ENCODE measurements at regions of chr11 and their contacts with region 1.

Region 1: DNA sequence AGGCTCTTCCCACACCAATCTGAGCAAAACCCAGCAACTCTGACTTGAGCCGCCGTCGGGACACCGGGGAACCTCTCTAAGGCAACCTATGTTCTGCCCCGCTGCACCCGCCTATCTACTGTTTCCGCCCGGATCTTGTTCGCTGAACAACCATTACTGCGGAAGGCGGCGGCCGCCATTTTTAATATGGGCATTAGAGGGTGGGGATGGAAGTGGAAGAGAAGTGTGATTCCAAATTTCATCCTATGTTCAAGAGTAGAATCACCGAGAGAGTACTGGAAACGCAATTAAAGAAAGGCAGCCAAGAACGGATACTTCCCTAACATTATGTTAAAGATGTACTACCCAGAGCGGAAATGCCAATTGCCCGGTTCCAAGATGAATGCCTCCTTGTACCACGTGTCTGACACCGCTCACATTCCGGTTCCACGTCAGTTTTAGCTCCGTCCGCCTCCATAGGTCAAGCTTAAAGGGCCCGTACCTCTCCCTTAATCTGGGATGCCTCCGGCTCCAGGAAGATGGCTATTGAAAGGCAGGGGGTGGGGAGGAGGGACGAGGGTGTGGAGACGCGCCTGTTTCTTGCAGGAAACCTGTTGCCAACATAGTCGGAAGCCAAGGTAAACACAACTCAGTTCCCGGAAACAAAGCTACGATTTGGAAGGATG is at the start of gene DPAGT1:
- DNase-seq: peak; percentile 98
- ATAC-seq: peak; percentile 80
- H3K4me3 ChIP-seq: peak within 1 kb of the TSS; percentile 58 to 78
- H3K27ac ChIP-seq: peak within 1 kb of the TSS; percentile 96
- H3K4me1 ChIP-seq: peaks cover 33 to 42% of the 10 kb centered on the region in 2 experiments
- H3K27me3 ChIP-seq: no peaks in the 10 kb centered on the region
- CTCF ChIP-seq: no peak
- POLR2A ChIP-seq: no peak
- RAD21 ChIP-seq: no peak
- total RNA-seq, gene DPAGT1: 45.1 TPM

Region 2: DNA sequence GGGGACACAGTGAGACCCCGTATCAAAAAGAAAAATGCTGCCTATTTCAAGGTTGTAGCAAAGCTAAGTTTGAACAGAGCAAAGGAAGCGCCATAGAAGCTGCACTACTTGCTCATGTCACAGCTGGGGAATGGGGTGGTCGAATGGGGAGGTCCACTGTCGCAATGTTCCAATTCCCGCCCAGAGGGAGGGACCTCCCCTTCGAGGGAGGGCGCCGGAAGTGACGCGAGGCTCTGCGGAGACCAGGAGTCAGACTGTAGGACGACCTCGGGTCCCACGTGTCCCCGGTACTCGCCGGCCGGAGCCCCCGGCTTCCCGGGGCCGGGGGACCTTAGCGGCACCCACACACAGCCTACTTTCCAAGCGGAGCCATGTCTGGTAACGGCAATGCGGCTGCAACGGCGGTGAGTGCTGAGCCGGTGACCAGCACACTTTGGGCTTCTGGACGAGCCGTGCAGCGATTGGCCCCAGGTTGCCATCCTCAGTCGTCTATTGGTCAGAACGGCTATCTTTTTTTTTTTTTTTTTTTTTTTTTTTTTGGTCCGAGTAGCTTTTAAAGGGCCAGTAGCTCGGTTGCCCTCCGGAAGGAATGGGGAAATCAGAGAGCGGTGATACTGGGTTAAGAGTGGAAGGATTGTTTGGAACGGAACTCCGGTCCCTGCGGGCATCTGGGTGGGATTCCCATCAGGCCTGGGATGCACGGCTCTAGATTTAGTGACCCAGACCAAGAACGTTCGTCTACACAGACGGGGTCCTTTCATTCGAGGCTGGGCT is 17.0 kb before region 1 on chr11 and contains the start of gene HMBS:
- CTCF ChIA-PET with region 1: no interaction called
- POLR2A ChIA-PET with region 1: interaction called, 20 read pairs
- RAD21 ChIA-PET with region 1: interaction called in 1 of 2 experiments, 7 read pairs
- intact Hi-C with region 1: no loop called
- DNase-seq: peak; percentile 80
- ATAC-seq: peak; percentile 89
- H3K4me3 ChIP-seq: peak within 1 kb of the TSS; percentile 72 to 90
- H3K27ac ChIP-seq: peak within 1 kb of the TSS; percentile 89
- H3K4me1 ChIP-seq: peaks cover 25 to 37% of the 10 kb centered on the region in 2 experiments
- H3K27me3 ChIP-seq: no peaks in the 10 kb centered on the region
- CTCF ChIP-seq: no peak
- POLR2A ChIP-seq: peak; percentile 74
- RAD21 ChIP-seq: no peak
- total RNA-seq, gene HMBS: 69.0 TPM

Region 3: DNA sequence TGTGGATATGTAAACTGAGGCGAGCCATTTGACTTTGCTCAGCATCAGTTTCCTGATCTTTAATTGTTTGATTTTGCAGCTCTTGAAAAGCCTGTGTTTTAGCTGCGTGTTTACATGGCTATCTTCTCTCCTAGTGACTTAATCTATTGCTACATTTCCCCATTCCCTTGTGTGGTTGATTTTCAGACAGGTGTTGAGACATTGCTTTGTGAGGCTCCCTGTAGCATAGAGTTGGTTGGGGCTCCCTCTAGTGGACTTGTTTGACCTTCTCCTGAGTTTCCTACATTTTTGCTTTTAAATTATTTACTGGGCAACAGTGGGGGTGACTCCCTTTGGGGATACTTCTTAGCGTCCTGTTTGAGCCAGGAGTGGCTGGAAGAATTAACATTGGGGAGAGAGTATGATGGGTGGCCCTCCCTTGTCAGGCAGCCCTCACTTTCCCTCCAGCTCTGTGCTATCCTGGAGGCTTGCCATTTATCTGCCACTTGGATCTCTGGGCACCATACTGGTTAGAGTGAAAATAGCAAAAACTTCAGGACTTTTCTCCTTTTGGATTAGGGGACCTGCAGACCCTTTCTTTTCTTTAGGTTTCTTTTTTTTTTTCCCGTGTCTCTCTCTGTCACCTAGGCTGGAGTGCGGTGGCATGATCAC is 95.1 kb after region 1 on chr11:
- CTCF ChIA-PET with region 1: interaction called, 3 read pairs
- POLR2A ChIA-PET with region 1: interaction called, 3 read pairs
- RAD21 ChIA-PET with region 1: no interaction called
- intact Hi-C with region 1: loop called (anchors 2 kb)
- DNase-seq: peak; percentile 76
- ATAC-seq: peak; percentile 86
- H3K4me3 ChIP-seq: no peak overlapping the region
- H3K27ac ChIP-seq: no peak overlapping the region
- H3K4me1 ChIP-seq: peaks cover 8 to 17% of the 10 kb centered on the region in 2 experiments; a peak in 2 of 4 replicates
- H3K27me3 ChIP-seq: no peaks in the 10 kb centered on the region
- CTCF ChIP-seq: peak; percentile 74 to 93 (median 87); a peak in 5 of 6 replicates
- POLR2A ChIP-seq: no peak
- RAD21 ChIP-seq: peak; percentile 94

Region 4: DNA sequence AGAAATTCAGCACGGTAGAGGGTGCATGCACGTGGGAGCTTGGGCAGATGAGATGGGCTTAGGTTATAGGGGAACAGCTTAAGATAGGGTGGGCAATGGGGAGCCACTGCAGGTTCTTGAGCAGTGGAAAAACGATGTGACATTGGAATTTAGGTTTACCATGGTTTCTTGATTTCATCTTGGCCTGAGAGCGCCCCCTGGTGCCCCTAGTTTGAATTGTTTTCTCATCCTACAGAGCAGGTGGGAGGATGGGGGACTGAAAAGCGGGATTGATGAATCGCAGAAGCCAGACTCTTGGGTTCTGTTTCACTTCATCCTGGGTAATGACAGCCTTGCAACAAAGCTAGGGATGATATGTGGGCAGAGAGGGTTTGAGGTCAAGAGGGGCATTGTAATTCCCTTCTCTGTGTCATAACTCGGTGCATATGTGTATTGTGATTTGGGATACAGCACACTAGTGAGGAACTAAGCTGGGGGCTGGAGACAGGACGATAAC is 221.7 kb after region 1 on chr11:
- CTCF ChIA-PET with region 1: interaction called, 5 read pairs
- POLR2A ChIA-PET with region 1: no interaction called
- RAD21 ChIA-PET with region 1: interaction called in 1 of 2 experiments, 4 read pairs
- intact Hi-C with region 1: loop called (anchors 5 kb)
- DNase-seq: peak; percentile 51
- ATAC-seq: peak; percentile 71
- H3K4me3 ChIP-seq: no peak overlapping the region
- H3K27ac ChIP-seq: no peak overlapping the region
- H3K4me1 ChIP-seq: peaks cover 0 to 10% of the 10 kb centered on the region in 2 experiments; a peak in 1 of 4 replicates
- H3K27me3 ChIP-seq: no peaks in the 10 kb centered on the region
- CTCF ChIP-seq: peak; percentile 76 to 90 (median 85)
- POLR2A ChIP-seq: no peak
- RAD21 ChIP-seq: peak; percentile 84

Region 5: DNA sequence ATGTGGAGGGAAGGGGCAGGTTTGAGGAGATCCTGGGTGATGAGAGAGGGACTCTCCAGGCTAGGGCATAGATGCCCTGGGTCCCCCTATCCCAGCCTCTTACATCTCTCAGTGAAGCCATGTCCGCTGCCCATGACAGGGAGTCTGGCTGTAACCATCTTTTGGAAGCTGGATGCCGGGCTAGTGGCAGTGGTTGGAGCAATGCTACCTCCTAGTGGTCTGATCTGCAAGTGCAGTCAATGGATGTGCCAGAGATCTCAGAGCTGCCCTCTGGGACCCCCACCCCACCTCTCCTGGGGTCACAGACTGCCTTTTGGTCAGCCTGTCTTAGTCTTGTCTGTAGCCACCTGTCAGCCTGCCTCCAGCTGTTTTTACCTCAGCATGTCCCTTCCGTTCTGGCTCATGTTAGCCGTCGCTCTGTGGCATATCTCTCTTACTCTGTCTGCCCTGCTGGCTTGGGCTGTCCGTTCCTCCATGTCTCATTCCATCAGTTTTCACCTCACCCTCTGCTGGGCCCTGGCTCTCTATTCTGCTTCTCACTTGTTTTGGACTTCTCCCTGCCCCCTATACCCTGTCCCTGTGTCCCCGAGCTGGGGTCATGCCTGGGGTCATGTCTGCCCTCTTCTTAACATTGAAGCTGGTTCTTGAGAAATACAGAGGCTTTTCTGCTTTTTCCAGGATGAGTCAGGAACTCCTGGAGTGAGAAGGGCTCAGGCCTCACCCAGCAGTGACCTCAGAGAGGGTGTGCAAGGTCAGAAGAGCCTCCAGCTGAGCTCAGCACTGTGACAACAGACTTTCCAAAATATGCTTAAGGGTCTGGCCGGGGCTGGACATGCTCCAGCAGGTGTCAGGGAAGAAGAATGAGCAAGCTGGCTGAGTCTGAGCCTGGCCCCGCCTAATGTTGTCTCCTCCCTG is 373.0 kb after region 1 on chr11:
- CTCF ChIA-PET with region 1: no interaction called
- POLR2A ChIA-PET with region 1: no interaction called
- RAD21 ChIA-PET with region 1: no interaction called
- intact Hi-C with region 1: loop called (anchors 5 kb)
- DNase-seq: no peak
- ATAC-seq: peak; percentile 78
- H3K4me3 ChIP-seq: no peak overlapping the region
- H3K27ac ChIP-seq: no peak overlapping the region
- H3K4me1 ChIP-seq: peaks cover 0 to 25% of the 10 kb centered on the region in 2 experiments; a peak in 1 of 4 replicates
- H3K27me3 ChIP-seq: no peaks in the 10 kb centered on the region
- CTCF ChIP-seq: peak; percentile 80 to 91 (median 88)
- POLR2A ChIP-seq: no peak
- RAD21 ChIP-seq: peak; percentile 90

Measured in HCT116 (cell line).